WTC11 (cell line): ENCODE measurements at regions of chr1 and their contacts with region 1.

Region 1: GRCh38 chr1:36134505-36135329 is 9.7 kb upstream of the COL8A2 start:
- DNase-seq: peak; percentile 81
- ATAC-seq: peak; percentile 95
- H3K4me3 Mint-ChIP-seq: no peak overlapping the region
- H3K27ac Mint-ChIP-seq: peak overlapping the region; percentile 26
- H3K4me1 Mint-ChIP-seq: peaks cover 6% of the 10 kb centered on the region
- H3K27me3 Mint-ChIP-seq: no peaks in the 10 kb centered on the region
- CTCF ChIP-seq: peak; percentile 80

Region 2: DNA sequence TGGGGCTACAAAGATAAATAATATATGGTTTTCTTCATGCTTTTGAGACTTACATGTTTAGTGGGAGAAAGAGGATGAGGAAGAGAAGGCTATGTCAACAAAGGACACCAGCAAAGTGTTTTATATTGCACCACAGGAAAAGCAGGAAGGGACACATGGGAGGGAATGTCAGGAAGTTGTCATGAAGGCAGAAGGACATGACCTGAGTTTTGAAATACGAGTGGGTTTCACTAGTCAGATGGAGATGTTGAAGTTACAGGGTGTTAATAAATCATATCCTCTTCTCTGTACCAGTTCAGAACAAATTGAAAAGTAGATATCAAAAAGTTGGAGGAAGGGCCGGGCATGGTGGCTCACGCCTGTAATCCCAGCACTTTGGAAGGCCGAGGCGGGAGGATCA is 269.9 kb before region 1 on chr1:
- CTCF ChIA-PET with region 1: no interaction called
- POLR2A ChIA-PET with region 1: no interaction called
- DNase-seq: no peak
- ATAC-seq: no peak
- H3K4me3 Mint-ChIP-seq: no peak overlapping the region
- H3K27ac Mint-ChIP-seq: no peak overlapping the region
- H3K4me1 Mint-ChIP-seq: peaks cover 3% of the 10 kb centered on the region; the same call in 1 of the 2 replicates
- H3K27me3 Mint-ChIP-seq: no peaks in the 10 kb centered on the region
- CTCF ChIP-seq: no peak

Region 3: GRCh38 chr1:36083993-36084738 is 50.6 kb before region 1 on chr1 and contains the start of gene TEKT2:
- CTCF ChIA-PET with region 1: interaction called, 12 read pairs
- POLR2A ChIA-PET with region 1: no interaction called
- DNase-seq: peak; percentile 87
- ATAC-seq: peak; percentile 49
- H3K4me3 Mint-ChIP-seq: peak within 1 kb of the TSS; percentile 66
- H3K27ac Mint-ChIP-seq: no peak within 1 kb of the TSS
- H3K4me1 Mint-ChIP-seq: peaks cover 9% of the 10 kb centered on the region
- H3K27me3 Mint-ChIP-seq: peaks cover 2% of the 10 kb centered on the region
- CTCF ChIP-seq: no peak
- total RNA-seq, gene TEKT2: 1.9 to 2.5 TPM (median 2.0 TPM) in 3 replicates

Region 4: GRCh38 chr1:36109041-36109679 is 25.6 kb before region 1 on chr1:
- CTCF ChIA-PET with region 1: interaction called, 89 read pairs
- POLR2A ChIA-PET with region 1: interaction called, 5 read pairs
- DNase-seq: no peak
- ATAC-seq: peak; percentile 35
- H3K4me3 Mint-ChIP-seq: no peak overlapping the region
- H3K27ac Mint-ChIP-seq: no peak overlapping the region
- H3K4me1 Mint-ChIP-seq: no peaks in the 10 kb centered on the region
- H3K27me3 Mint-ChIP-seq: no peaks in the 10 kb centered on the region
- CTCF ChIP-seq: no peak

Region 5: GRCh38 chr1:36115200-36115669 is 19.5 kb before region 1 on chr1:
- CTCF ChIA-PET with region 1: interaction called, 55 read pairs
- POLR2A ChIA-PET with region 1: no interaction called
- DNase-seq: no peak
- ATAC-seq: no peak
- H3K4me3 Mint-ChIP-seq: no peak overlapping the region
- H3K27ac Mint-ChIP-seq: no peak overlapping the region
- H3K4me1 Mint-ChIP-seq: no peaks in the 10 kb centered on the region
- H3K27me3 Mint-ChIP-seq: no peaks in the 10 kb centered on the region
- CTCF ChIP-seq: no peak

Region 6: DNA sequence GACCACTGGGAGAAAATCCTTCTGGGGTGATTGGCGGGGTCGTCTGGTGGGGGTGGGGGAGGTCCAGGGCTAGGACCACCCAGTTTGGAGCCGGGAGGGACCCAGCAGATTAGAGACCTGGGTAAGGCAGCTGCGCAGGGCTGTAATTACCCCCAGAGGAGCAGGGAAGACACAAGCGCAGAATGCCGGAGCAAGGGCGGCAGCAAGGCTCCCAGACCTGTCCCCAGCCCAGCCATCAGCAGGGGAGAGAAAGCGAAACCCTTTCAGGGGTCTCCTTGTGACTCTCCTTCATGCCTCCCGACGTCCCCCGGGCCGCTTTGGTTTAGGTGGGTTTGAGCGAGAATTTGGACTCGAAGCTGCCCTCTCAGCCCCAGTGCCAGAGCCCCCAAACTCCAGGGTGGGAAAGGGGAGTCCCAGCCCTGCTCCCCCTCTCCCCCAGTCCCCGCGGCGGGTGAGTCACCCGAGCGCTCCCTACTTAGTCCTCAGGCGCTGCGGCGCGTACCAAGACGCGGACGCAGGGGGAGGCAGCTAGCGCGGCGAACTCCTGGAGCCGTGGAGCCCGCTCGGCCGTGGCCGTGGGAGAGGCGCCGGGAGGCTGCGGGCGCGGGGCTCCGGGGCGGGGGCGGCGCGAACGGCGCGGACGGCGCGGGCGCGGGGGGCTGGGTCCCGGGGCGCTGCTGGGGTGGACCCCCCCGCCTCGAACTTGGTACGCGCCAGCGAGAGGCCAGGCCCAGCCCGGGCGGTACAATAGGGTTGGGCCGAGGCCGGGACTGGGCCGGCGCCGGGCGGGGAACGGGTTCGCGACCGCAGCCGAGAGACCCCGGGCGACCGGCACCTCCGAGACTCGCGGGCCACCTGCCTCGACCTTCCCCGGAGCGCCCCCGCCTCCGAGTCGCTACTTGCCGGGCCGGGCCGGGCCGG is 21.0 kb after region 1 on chr1 and contains the start of gene MAP7D1:
- CTCF ChIA-PET with region 1: interaction called, 57 read pairs
- POLR2A ChIA-PET with region 1: no interaction called
- DNase-seq: peak; percentile 80
- ATAC-seq: peak; percentile 43
- H3K4me3 Mint-ChIP-seq: peak within 1 kb of the TSS; percentile 79
- H3K27ac Mint-ChIP-seq: no peak within 1 kb of the TSS
- H3K4me1 Mint-ChIP-seq: peaks cover 43% of the 10 kb centered on the region
- H3K27me3 Mint-ChIP-seq: peaks cover 37% of the 10 kb centered on the region
- CTCF ChIP-seq: no peak
- total RNA-seq, gene MAP7D1: 65.0 to 88.7 TPM (median 72.0 TPM) in 3 replicates

Region 7: GRCh38 chr1:36223993-36224536 is 89.3 kb after region 1 on chr1 and contains the start of gene THRAP3:
- CTCF ChIA-PET with region 1: interaction called, 11 read pairs
- POLR2A ChIA-PET with region 1: no interaction called
- DNase-seq: peak; percentile 100
- ATAC-seq: peak; percentile 95
- H3K4me3 Mint-ChIP-seq: peak within 1 kb of the TSS; percentile 97
- H3K27ac Mint-ChIP-seq: peak within 1 kb of the TSS; percentile 100
- H3K4me1 Mint-ChIP-seq: peaks cover 16% of the 10 kb centered on the region
- H3K27me3 Mint-ChIP-seq: no peaks in the 10 kb centered on the region
- CTCF ChIP-seq: no peak
- total RNA-seq, gene THRAP3: 150 to 160 TPM (median 153 TPM) in 3 replicates

Region 8: GRCh38 chr1:36274201-36274600 is 139.5 kb after region 1 on chr1:
- CTCF ChIA-PET with region 1: no interaction called
- POLR2A ChIA-PET with region 1: no interaction called
- DNase-seq: no peak
- ATAC-seq: no peak
- H3K4me3 Mint-ChIP-seq: no peak overlapping the region
- H3K27ac Mint-ChIP-seq: no peak overlapping the region
- H3K4me1 Mint-ChIP-seq: no peaks in the 10 kb centered on the region
- H3K27me3 Mint-ChIP-seq: no peaks in the 10 kb centered on the region
- CTCF ChIP-seq: no peak

Region 9: DNA sequence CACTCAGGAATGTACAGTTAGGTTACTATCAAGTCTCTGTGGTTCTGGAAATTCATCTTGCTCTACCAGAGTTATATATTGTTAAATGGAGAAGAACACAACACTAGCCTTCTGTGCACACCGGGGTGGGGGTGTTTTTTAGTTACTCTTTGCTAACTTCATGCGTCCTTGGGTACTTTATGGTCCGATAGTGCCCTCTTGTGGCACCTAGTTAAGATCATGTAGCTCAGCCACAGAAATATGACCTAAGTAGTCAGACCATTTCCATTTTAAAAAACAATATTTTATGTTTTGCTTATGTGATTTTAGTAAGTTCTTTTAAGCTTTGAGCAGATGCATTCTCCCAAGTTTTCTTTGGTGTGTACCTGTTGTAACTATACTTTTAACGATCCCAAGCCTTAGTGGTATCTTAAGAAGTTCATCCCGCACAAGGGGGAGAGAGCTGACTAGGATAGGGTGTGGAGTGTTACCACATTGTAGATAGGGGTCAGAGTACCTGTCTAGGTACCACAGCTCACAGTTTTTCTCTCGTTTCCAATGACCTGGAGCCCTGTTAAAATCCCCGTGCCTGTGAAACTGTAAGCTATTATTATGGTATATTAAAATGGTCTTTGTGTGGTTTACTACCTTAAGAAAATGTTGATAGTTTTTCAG is 150.9 kb after region 1 on chr1:
- CTCF ChIA-PET with region 1: interaction called, 11 read pairs
- POLR2A ChIA-PET with region 1: no interaction called
- DNase-seq: peak; percentile 44
- ATAC-seq: peak; percentile 71
- H3K4me3 Mint-ChIP-seq: no peak overlapping the region
- H3K27ac Mint-ChIP-seq: peak overlapping the region; percentile 57; the same call in 1 of the 2 replicates
- H3K4me1 Mint-ChIP-seq: no peaks in the 10 kb centered on the region
- H3K27me3 Mint-ChIP-seq: no peaks in the 10 kb centered on the region
- CTCF ChIP-seq: peak; percentile 55